Activated T-helper 1 cell treated with anti-CD3 and anti-CD28 coated beads, Interleukin-12 subunit alpha, Interleukin-12 subunit beta, Interleukin-2, Interleukin-4 antibody, amounts not matched to agents 30 ng/mL and 10 ng/mL and 1 ng/mL, durations not matched to agents 14 hours and 24 hours and 36 hours (primary cell): ENCODE measurements at regions of chr4 and their contacts with region 1.

Region 1: GRCh38 chr4:38687571-38688011 is 23.6 kb downstream of the KLF3 start:
- DNase-seq: no peak
- H3K4me3 Mint-ChIP-seq: no peak overlapping the region
- H3K27ac Mint-ChIP-seq: no peak overlapping the region
- H3K4me1 Mint-ChIP-seq: peaks cover 37% of the 10 kb centered on the region
- H3K27me3 Mint-ChIP-seq: no peaks in the 10 kb centered on the region

Region 2: GRCh38 chr4:38663801-38664705 is 23.5 kb before region 1 on chr4 and contains the start of gene KLF3:
- intact Hi-C with region 1: loop called (anchors 2 kb)
- DNase-seq: peak; percentile 86
- H3K4me3 Mint-ChIP-seq: peak within 1 kb of the TSS; percentile 85
- H3K27ac Mint-ChIP-seq: peak within 1 kb of the TSS; percentile 53
- H3K4me1 Mint-ChIP-seq: peaks cover 55% of the 10 kb centered on the region
- H3K27me3 Mint-ChIP-seq: peaks cover 24% of the 10 kb centered on the region
- total RNA-seq, gene KLF3: 1.8 and 1.9 TPM in 2 replicates

Region 3: GRCh38 chr4:38723726-38724474 is 36.3 kb after region 1 on chr4:
- intact Hi-C with region 1: no loop called
- DNase-seq: no peak
- H3K4me3 Mint-ChIP-seq: no peak overlapping the region
- H3K27ac Mint-ChIP-seq: no peak overlapping the region
- H3K4me1 Mint-ChIP-seq: peaks cover 19% of the 10 kb centered on the region
- H3K27me3 Mint-ChIP-seq: peaks cover 14% of the 10 kb centered on the region